Panc1 (cell line): ENCODE measurements at regions of chr2 and their contacts with region 1.

Region 1: DNA sequence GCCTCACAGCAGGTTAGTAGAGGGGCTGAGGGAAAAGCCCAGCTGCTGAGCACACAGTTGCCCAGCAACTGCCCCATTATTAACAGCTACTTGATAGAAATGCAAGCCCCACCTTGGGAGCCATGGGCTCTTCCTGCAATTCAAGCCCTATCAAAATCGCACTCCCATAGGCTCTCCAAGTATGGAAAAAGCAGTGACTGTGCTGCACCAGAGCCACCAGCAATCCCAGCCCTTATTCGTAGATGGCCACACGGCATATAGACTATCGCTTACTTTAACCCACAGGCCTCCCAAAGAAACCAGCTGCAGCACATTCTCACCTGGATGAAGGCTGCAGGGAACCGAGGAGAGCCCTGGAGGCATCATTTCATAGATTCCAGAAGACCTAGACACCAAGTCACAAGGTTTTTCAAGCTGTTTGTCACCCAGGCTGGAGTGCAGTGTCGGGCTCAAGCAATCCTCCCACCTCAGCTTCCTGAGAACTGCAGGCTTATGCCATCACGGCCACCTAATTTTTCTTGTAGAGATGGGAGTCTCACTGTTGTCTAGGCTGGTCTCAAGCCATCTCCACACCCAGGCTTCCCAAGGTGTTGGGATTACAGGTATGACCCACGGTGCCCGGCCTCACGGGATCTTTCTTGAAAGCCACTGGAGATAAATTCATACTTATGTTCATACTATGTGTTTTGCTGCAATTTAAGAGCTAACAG is 11.3 kb downstream of the NCL start:
- DNase-seq: no peak
- ATAC-seq: peak; percentile 69
- H3K4me3 ChIP-seq: no peak overlapping the region
- H3K27ac ChIP-seq: peak overlapping the region; percentile 44; the same call in 1 of the 2 replicates
- H3K4me1 ChIP-seq: peaks cover 31% of the 10 kb centered on the region
- H3K27me3 ChIP-seq: no peaks in the 10 kb centered on the region
- CTCF ChIP-seq: no peak

Region 2: GRCh38 chr2:231227309-231228162 is 225.4 kb before region 1 on chr2:
- CTCF ChIA-PET with region 1: interaction called, 3 read pairs
- POLR2A ChIA-PET with region 1: no interaction called
- in situ Hi-C with region 1: no loop called
- intact Hi-C with region 1: loop called (anchors 5 kb)
- DNase-seq: peak; percentile 46
- ATAC-seq: peak; percentile 98
- H3K4me3 ChIP-seq: no peak overlapping the region
- H3K27ac ChIP-seq: peak overlapping the region; percentile 20; the same call in 1 of the 2 replicates
- H3K4me1 ChIP-seq: 0 out of 2 replicates have a peak, but pooled peaks cover 4% of the 10 kb centered on the region
- H3K27me3 ChIP-seq: no peaks in the 10 kb centered on the region
- CTCF ChIP-seq: peak; percentile 88

Region 3: DNA sequence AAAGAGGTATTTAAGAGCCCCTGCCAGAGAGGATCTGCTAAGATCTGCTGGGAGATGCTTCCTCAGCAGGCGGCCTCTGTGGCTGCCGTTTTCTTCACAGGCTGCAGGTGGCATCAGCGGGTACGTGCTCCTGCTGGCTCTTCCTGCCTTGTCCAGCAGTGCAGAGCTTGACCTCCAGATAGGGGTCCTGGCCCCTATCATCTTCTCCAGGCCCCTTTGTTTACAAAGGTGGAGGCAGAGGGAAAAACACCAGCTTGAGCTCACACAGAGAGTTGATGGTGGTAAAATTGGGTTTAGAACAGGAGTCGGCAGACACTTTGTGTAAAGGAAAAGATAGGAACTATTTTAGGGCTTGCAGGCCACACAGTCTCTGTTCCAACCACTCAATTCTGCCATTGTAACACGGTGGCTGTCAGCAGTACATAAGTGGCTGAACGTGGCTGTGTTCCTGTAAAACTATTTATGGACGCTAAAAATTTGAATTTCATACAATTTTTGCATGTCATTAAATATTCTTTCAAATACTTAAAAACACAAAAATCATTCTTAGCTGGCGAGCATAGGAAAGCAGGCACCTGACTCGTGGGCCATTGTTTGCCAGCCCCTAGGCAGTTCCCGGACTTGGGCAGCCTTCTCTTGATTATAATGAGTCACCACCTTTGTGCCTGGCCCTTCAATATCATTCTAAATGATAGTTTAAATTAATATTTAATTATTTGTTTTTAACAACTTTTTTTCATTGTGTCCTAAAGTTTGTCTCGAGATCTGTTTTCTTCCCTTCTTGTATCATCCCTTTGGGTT is 155.6 kb before region 1 on chr2:
- CTCF ChIA-PET with region 1: interaction called, 11 read pairs
- POLR2A ChIA-PET with region 1: interaction called, 7 read pairs
- in situ Hi-C with region 1: no loop called
- intact Hi-C with region 1: no loop called
- DNase-seq: peak; percentile 45
- ATAC-seq: peak; percentile 94
- H3K4me3 ChIP-seq: no peak overlapping the region
- H3K27ac ChIP-seq: peak overlapping the region; percentile 67
- H3K4me1 ChIP-seq: peaks cover 15% of the 10 kb centered on the region
- H3K27me3 ChIP-seq: no peaks in the 10 kb centered on the region
- CTCF ChIP-seq: peak; percentile 92

Region 4: DNA sequence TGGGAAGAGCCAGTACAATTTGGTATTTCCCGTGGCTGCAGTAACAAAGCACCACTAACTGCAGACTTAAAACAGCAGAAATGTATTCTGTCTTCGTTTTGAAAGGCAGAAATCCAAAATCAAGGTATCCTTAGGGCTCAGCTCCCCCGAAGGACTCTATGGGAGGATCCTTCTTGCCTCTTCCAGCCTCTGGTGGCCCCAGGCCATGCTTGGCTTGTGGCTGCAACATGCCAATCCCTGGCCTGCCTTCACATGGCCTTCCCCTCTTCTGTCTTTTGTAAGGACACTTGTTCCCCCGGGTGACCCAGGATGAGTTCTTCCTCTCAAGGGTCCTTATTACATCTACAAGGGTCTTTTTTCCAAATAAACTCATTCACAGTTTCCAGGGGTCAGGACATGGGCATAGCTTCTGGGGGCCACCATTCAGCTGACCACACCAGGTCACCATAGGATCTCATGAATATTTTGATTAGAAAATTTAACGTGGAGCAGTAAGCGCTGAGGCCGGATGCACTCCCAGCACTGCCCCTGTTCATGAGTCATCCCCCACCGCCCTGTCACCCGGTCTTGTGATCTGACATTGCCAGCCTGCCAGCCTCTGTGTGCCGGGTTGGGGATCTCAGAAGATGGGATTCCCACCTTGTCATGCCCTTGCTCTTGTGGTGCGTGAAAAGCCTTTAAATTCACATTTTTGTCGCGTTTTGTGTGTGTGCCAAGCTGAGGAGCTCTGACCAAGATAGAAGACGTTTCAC is 118.6 kb before region 1 on chr2:
- CTCF ChIA-PET with region 1: no interaction called
- POLR2A ChIA-PET with region 1: no interaction called
- in situ Hi-C with region 1: no loop called
- intact Hi-C with region 1: no loop called
- DNase-seq: no peak
- ATAC-seq: no peak
- H3K4me3 ChIP-seq: no peak overlapping the region
- H3K27ac ChIP-seq: no peak overlapping the region
- H3K4me1 ChIP-seq: no peaks in the 10 kb centered on the region
- H3K27me3 ChIP-seq: no peaks in the 10 kb centered on the region
- CTCF ChIP-seq: no peak

Region 5: GRCh38 chr2:231627384-231628120 is 174.6 kb after region 1 on chr2:
- CTCF ChIA-PET with region 1: no interaction called
- POLR2A ChIA-PET with region 1: no interaction called
- in situ Hi-C with region 1: no loop called
- intact Hi-C with region 1: no loop called
- DNase-seq: no peak
- ATAC-seq: peak; percentile 54
- H3K4me3 ChIP-seq: 0 out of 4 replicates have a peak overlapping the region, but pooled peaks of 1 of the 2 experiments have one; percentile 8
- H3K27ac ChIP-seq: peak overlapping the region; percentile 23; the same call in 1 of the 2 replicates
- H3K4me1 ChIP-seq: no peaks in the 10 kb centered on the region
- H3K27me3 ChIP-seq: no peaks in the 10 kb centered on the region
- CTCF ChIP-seq: no peak

Region 6: GRCh38 chr2:233297076-233297475 is 1844.1 kb after region 1 on chr2:
- CTCF ChIA-PET with region 1: interaction called, 15 read pairs
- POLR2A ChIA-PET with region 1: no interaction called
- in situ Hi-C with region 1: no loop called
- intact Hi-C with region 1: no loop called
- DNase-seq: no peak
- ATAC-seq: no peak
- H3K4me3 ChIP-seq: no peak overlapping the region
- H3K27ac ChIP-seq: no peak overlapping the region
- H3K4me1 ChIP-seq: no peaks in the 10 kb centered on the region; the same call in 1 of the 2 replicates
- H3K27me3 ChIP-seq: no peaks in the 10 kb centered on the region
- CTCF ChIP-seq: no peak